Heart left ventricle (tissue), 16 donors: ENCODE measurements at regions of chr7 and their contacts with region 1.

Region 1: GRCh38 chr7:38938001-38938485 is 29.1 kb upstream of the VPS41 start:
- DNase-seq: no peak
- ATAC-seq: no peak
- H3K4me3 ChIP-seq: no peak overlapping the region
- H3K27ac ChIP-seq: no peak overlapping the region
- H3K4me1 ChIP-seq: no peaks in the 10 kb centered on the region
- H3K27me3 ChIP-seq: no peaks in the 10 kb centered on the region
- CTCF ChIP-seq: no peak
- POLR2A ChIP-seq: no peak

Region 2: GRCh38 chr7:37920305-37920848 is 1017.7 kb before region 1 on chr7 and contains the start of gene EPDR1:
- intact Hi-C with region 1: no loop called
- DNase-seq: peak; percentile 49 to 78 (median 73)
- ATAC-seq: peak; percentile 33 to 83 (median 70)
- H3K4me3 ChIP-seq: peak within 1 kb of the TSS; percentile 46 to 86 (median 76)
- H3K27ac ChIP-seq: peak within 1 kb of the TSS; percentile 72 to 96 (median 88)
- H3K4me1 ChIP-seq: peaks cover 0 to 40% (median 13%) of the 10 kb centered on the region in 12 donors
- H3K27me3 ChIP-seq: peaks cover 0 to 21% (median 5%) of the 10 kb centered on the region in 9 donors
- CTCF ChIP-seq: peak in 6 of 12 donors; percentile 4 to 41 (median 23)
- POLR2A ChIP-seq: no peak
- total RNA-seq, gene EPDR1: 31.0 to 73.0 (median 45.5) TPM

Region 3: GRCh38 chr7:39510864-39511354 is 572.9 kb after region 1 on chr7:
- intact Hi-C with region 1: loop called in 5 of 10 experiments (anchors 5 to 10 kb)
- DNase-seq: no peak
- ATAC-seq: no peak
- H3K4me3 ChIP-seq: no peak overlapping the region
- H3K27ac ChIP-seq: no peak overlapping the region
- H3K4me1 ChIP-seq: no peaks in the 10 kb centered on the region
- H3K27me3 ChIP-seq: no peaks in the 10 kb centered on the region
- CTCF ChIP-seq: no peak
- POLR2A ChIP-seq: no peak

Region 4: DNA sequence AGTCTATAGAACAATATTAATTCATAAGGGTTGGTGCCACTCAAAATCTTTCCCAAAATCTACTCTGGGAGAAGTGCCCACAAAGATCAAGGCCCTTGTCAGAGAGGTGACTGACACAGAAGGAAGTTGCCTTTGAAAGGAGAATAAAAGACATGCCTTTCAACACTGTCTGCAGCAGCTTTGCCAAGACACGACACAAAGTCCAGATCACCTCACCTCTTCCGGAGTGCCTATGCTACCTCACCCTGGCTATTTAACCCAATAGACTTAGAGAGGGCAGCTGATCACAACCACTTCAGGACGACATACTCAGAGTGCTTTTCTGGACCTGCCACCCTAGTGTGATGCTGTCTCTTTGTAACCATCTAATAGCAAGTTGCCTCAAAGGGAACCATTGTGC is 579.2 kb after region 1 on chr7:
- intact Hi-C with region 1: loop called in 7 of 10 experiments (anchors 5 to 10 kb)
- DNase-seq: no peak
- ATAC-seq: no peak
- H3K4me3 ChIP-seq: no peak overlapping the region
- H3K27ac ChIP-seq: no peak overlapping the region
- H3K4me1 ChIP-seq: peaks cover 0 to 6% (median 0%) of the 10 kb centered on the region in 12 donors
- H3K27me3 ChIP-seq: peaks cover 0 to 9% (median 0%) of the 10 kb centered on the region in 9 donors
- CTCF ChIP-seq: no peak
- POLR2A ChIP-seq: no peak